H1 (cell line): ENCODE measurements at regions of chr12 and their contacts with region 1.

Region 1: DNA sequence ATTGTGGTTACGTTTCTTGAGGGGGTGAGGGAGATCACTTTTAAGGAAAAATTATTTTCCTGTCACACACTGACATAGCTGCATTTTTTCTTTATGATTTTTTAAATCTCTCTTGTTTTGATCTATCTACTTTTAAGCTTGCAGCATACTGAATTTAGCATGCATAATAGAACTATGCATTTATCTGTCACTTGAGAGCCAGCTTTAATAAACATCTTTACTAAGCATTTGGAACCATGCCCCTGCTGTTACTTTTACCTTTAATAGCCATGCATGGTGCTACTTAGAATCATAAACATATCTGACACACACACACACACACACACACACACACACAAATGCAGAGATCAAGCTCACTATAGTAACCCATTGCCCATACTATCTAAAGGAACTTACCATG is 486.2 kb downstream of the NELL2 start:
- DNase-seq: no peak
- H3K4me3 ChIP-seq: no peak overlapping the region
- H3K27ac ChIP-seq: no peak overlapping the region
- H3K4me1 ChIP-seq: no peaks in the 10 kb centered on the region
- H3K27me3 ChIP-seq: no peaks in the 10 kb centered on the region
- CTCF ChIP-seq: no peak
- EP300 ChIP-seq: no peak
- POLR2A ChIP-seq: no peak
- RAD21 ChIP-seq: no peak

Region 2: DNA sequence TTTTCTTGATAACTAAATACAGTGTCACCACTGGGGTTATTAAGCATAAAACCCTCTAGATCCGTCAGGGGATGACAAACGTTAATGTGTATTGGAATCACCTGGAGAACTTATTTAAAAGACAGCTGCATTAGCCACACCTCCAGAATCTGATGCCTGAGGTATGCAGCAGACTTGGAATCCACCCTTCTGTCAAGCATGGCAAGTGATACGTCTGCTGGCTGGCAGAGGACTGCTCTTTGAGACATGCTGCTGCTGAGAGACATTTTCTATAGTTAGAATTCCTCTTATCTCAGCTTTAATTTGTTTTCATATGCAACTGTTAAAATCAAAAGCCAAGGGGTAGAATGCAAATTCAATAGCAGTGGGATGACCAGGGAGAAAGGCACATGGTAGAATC is 10.1 kb before region 1 on chr12:
- CTCF ChIA-PET with region 1: interaction called, 10 read pairs
- POLR2A ChIA-PET with region 1: interaction called, 3 read pairs
- DNase-seq: no peak
- H3K4me3 ChIP-seq: no peak overlapping the region; a peak in 1 of 8 replicates
- H3K27ac ChIP-seq: no peak overlapping the region
- H3K4me1 ChIP-seq: peaks cover 4 to 13% (median 6%) of the 10 kb centered on the region in 4 experiments; a peak in 3 of 7 replicates
- H3K27me3 ChIP-seq: no peaks in the 10 kb centered on the region
- CTCF ChIP-seq: no peak
- EP300 ChIP-seq: no peak
- POLR2A ChIP-seq: no peak
- RAD21 ChIP-seq: no peak